Activated CD8-positive, alpha-beta memory T cell treated with anti-CD3 and anti-CD28 coated beads, Interleukin-2, amount 10 ng/mL, durations not matched to agents 7 days and 5 days (primary cell): ENCODE measurements at regions of chr5 and their contacts with region 1.

Region 1: GRCh38 chr5:142713121-142713706 is 27.3 kb upstream of the FGF1 start:
- DNase-seq: peak; percentile 89
- ATAC-seq: peak; percentile 100
- H3K4me3 Mint-ChIP-seq: peak overlapping the region; percentile 62
- H3K27ac Mint-ChIP-seq: no peak overlapping the region
- H3K4me1 Mint-ChIP-seq: peaks cover 8% of the 10 kb centered on the region
- H3K27me3 Mint-ChIP-seq: peaks cover 6% of the 10 kb centered on the region

Region 2: GRCh38 chr5:142342128-142342981 is 370.9 kb before region 1 on chr5:
- CTCF ChIA-PET with region 1: no interaction called
- DNase-seq: no peak
- ATAC-seq: no peak
- H3K4me3 Mint-ChIP-seq: no peak overlapping the region
- H3K27ac Mint-ChIP-seq: no peak overlapping the region
- H3K4me1 Mint-ChIP-seq: no peaks in the 10 kb centered on the region
- H3K27me3 Mint-ChIP-seq: peaks cover 5% of the 10 kb centered on the region

Region 3: GRCh38 chr5:142699184-142699720 is 14.0 kb before region 1 on chr5:
- CTCF ChIA-PET with region 1: interaction called, 29 read pairs
- DNase-seq: peak; percentile 85
- ATAC-seq: peak; percentile 90
- H3K4me3 Mint-ChIP-seq: no peak overlapping the region
- H3K27ac Mint-ChIP-seq: no peak overlapping the region
- H3K4me1 Mint-ChIP-seq: no peaks in the 10 kb centered on the region
- H3K27me3 Mint-ChIP-seq: peaks cover 18% of the 10 kb centered on the region

Region 4: DNA sequence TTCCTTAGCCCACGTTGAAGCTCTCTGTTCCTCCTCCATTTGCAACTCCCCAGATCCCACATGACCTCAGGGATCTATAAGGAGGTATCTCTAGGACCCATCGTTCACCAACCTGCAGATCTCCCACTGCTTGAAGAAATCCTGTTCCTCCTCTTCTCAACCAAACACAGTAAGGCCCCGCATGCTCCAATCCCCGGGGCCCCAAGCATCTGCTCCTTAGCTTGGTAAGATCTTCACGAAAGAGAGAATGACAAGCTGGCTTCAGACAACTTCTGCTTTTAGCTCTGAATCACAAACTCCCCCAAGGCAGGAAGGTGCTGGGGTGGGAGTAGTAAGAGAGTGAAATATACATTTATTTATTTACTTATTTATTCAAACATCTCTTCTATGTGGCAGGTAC is 24.0 kb after region 1 on chr5:
- CTCF ChIA-PET with region 1: interaction called, 140 read pairs
- DNase-seq: no peak
- ATAC-seq: no peak
- H3K4me3 Mint-ChIP-seq: no peak overlapping the region
- H3K27ac Mint-ChIP-seq: no peak overlapping the region
- H3K4me1 Mint-ChIP-seq: peaks cover 18% of the 10 kb centered on the region
- H3K27me3 Mint-ChIP-seq: peaks cover 4% of the 10 kb centered on the region

Region 5: DNA sequence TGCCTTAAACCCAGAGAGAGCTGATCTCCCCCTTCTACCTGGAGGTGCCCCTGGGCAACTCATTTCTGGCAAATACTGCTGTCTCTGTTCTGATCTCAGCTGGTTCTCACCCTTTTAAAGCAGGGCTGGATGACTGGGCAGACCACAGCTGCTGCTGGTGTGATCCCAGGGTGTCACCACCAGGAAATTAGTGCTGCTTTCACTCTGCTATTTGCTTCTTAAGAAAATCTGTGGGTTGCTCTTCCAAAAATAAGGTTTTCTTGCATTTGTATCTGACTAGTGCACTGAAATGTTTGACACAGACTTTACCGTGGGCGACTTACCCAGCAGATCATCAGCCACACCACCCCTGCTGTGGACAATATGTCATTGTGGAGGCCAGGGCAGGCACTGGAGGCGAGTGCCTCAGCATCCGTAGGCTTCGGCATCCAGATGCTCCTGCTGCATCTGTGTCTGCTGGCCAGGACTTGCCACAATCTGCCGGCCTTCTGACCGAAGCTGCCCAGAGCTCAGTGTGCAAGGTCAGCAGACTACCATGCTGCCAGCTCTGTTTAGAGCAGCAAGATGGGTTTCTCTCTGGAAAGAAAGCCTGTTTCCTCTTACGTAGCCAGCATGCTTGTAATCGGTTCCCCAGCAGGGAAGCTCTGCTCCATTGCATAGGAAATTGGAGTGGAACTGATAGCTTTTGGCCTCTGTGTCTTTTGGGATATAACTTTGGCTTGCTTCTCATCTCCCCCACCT is 70.6 kb after region 1 on chr5:
- CTCF ChIA-PET with region 1: interaction called, 11 read pairs
- DNase-seq: peak; percentile 92
- ATAC-seq: peak; percentile 87
- H3K4me3 Mint-ChIP-seq: peak overlapping the region; percentile 70
- H3K27ac Mint-ChIP-seq: peak overlapping the region; percentile 86
- H3K4me1 Mint-ChIP-seq: peaks cover 75% of the 10 kb centered on the region
- H3K27me3 Mint-ChIP-seq: no peaks in the 10 kb centered on the region

Region 6: DNA sequence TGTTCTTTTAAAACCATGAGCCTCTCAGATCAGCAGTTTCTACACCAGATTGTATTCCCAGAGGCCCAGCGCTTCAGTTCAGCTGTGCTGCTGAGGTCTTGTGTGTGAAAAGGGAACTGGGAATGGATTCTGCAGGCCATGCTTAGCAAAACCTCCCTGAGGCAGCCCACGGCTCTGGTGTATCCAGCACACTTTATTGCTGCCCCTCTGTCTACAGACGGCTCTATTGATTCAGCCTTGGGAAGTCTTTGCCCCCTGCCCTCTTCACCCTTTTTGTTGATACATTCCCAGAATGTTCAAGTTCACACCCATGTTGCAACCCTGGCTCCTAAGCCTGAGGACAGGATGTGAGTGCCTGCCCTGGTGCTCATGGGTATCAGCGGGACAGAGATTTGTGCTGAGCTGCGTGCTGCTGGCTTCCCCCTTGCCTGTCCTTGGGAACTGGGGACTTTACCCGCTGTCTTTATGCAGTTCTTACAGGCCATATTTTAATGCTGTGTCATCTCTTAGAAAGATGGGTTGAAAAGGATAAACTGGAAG is 94.2 kb after region 1 on chr5:
- CTCF ChIA-PET with region 1: no interaction called
- DNase-seq: no peak
- ATAC-seq: no peak
- H3K4me3 Mint-ChIP-seq: no peak overlapping the region
- H3K27ac Mint-ChIP-seq: no peak overlapping the region
- H3K4me1 Mint-ChIP-seq: peaks cover 29% of the 10 kb centered on the region
- H3K27me3 Mint-ChIP-seq: no peaks in the 10 kb centered on the region

Region 7: GRCh38 chr5:142913728-142914338 is 200.6 kb after region 1 on chr5:
- CTCF ChIA-PET with region 1: interaction called, 12 read pairs
- DNase-seq: no peak
- ATAC-seq: no peak
- H3K4me3 Mint-ChIP-seq: no peak overlapping the region
- H3K27ac Mint-ChIP-seq: no peak overlapping the region
- H3K4me1 Mint-ChIP-seq: no peaks in the 10 kb centered on the region
- H3K27me3 Mint-ChIP-seq: no peaks in the 10 kb centered on the region

Region 8: DNA sequence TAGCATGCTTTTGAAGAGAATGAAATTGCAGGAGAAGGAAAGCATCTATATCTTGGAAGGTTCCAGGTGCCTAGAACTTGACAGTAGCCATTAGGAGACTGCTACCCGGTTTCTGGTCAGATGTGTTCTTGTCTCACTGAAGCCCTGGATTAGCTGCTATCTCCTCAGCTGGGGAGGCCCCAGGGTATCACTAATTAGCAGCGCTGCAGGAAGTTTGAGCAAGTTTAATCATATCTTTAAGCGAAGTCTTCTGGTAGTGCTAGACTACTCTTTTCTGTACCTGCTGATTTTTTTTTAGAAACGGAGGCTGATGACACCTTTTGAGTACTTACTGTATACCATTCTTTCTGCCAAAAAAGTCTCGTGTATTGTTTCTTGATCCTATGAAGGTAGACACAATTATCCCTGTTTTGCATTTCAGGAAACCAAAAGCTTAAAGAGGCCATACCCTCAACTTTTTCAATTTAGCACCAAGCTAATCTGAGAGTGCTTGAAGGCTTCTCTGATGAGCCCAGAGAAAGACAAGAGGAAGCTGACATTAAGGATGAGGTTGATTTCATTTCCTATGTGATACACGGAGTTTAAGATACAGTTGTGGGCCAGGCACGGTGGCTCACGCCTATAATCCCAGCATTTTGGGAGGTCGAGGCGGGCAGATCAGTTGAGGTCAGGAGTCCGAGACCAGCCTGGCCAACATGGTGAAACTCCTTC is 258.2 kb after region 1 on chr5:
- CTCF ChIA-PET with region 1: no interaction called
- DNase-seq: no peak
- ATAC-seq: no peak
- H3K4me3 Mint-ChIP-seq: no peak overlapping the region
- H3K27ac Mint-ChIP-seq: peak overlapping the region; percentile 65
- H3K4me1 Mint-ChIP-seq: peaks cover 35% of the 10 kb centered on the region
- H3K27me3 Mint-ChIP-seq: no peaks in the 10 kb centered on the region